ENCODE measurements at regions of chr3 and their contacts with region 1.

Region 1: GRCh38 chr3:33773637-33774036 is 24.8 kb upstream of the PDCD6IP start:
- DNase-seq: no peak
- ATAC-seq: no peak
- H3K4me3 ChIP-seq: no peak overlapping the region
- H3K27ac ChIP-seq: no peak overlapping the region
- H3K4me1 ChIP-seq: no peaks in the 10 kb centered on the region
- H3K27me3 ChIP-seq: no peaks in the 10 kb centered on the region
- CTCF ChIP-seq: no peak

Region 2: DNA sequence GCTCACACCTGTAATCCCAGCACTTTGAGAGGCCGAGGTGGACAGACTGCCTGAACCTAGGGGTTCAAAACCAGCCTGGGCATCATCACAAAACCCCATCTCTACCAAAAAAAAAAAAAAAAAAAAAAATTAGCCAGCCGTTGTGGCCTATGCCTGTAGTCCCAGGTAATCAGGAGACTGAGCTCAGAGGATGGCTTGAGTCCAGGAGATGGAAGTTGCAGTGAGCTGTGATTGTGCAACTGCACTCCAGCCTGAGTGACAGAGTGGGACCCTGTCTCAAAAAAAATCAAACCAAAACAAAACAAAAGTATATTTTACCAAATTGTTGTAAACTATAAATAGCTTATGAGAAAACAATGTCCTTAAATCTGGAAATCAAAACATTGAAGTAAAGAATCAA is 298.7 kb before region 1 on chr3:
- CTCF ChIA-PET with region 1: interaction called, 19 read pairs
- POLR2A ChIA-PET with region 1: no interaction called
- intact Hi-C with region 1: no loop called
- DNase-seq: no peak
- ATAC-seq: no peak
- H3K4me3 ChIP-seq: no peak overlapping the region
- H3K27ac ChIP-seq: no peak overlapping the region
- H3K4me1 ChIP-seq: no peaks in the 10 kb centered on the region
- H3K27me3 ChIP-seq: no peaks in the 10 kb centered on the region
- CTCF ChIP-seq: no peak

Region 3: GRCh38 chr3:33636125-33636850 is 137.3 kb before region 1 on chr3:
- CTCF ChIA-PET with region 1: interaction called, 3 read pairs
- POLR2A ChIA-PET with region 1: no interaction called
- intact Hi-C with region 1: loop called (anchors 1 kb)
- DNase-seq: peak; percentile 76
- ATAC-seq: peak; percentile 63; the same call in 1 of the 2 replicates
- H3K4me3 ChIP-seq: no peak overlapping the region
- H3K27ac ChIP-seq: no peak overlapping the region
- H3K4me1 ChIP-seq: no peaks in the 10 kb centered on the region
- H3K27me3 ChIP-seq: no peaks in the 10 kb centered on the region
- CTCF ChIP-seq: peak; percentile 86

Region 4: GRCh38 chr3:33732394-33732793 is 41.2 kb before region 1 on chr3:
- CTCF ChIA-PET with region 1: no interaction called
- POLR2A ChIA-PET with region 1: no interaction called
- intact Hi-C with region 1: loop called (anchors 2 kb)
- DNase-seq: peak; percentile 28
- ATAC-seq: no peak
- H3K4me3 ChIP-seq: no peak overlapping the region
- H3K27ac ChIP-seq: no peak overlapping the region
- H3K4me1 ChIP-seq: no peaks in the 10 kb centered on the region
- H3K27me3 ChIP-seq: peaks cover 4% of the 10 kb centered on the region; the same call in 1 of the 2 replicates
- CTCF ChIP-seq: peak; percentile 45